CD8-positive, alpha-beta T cell (primary cell): ENCODE measurements at regions of chr17 and their contacts with region 1.

Region 1: DNA sequence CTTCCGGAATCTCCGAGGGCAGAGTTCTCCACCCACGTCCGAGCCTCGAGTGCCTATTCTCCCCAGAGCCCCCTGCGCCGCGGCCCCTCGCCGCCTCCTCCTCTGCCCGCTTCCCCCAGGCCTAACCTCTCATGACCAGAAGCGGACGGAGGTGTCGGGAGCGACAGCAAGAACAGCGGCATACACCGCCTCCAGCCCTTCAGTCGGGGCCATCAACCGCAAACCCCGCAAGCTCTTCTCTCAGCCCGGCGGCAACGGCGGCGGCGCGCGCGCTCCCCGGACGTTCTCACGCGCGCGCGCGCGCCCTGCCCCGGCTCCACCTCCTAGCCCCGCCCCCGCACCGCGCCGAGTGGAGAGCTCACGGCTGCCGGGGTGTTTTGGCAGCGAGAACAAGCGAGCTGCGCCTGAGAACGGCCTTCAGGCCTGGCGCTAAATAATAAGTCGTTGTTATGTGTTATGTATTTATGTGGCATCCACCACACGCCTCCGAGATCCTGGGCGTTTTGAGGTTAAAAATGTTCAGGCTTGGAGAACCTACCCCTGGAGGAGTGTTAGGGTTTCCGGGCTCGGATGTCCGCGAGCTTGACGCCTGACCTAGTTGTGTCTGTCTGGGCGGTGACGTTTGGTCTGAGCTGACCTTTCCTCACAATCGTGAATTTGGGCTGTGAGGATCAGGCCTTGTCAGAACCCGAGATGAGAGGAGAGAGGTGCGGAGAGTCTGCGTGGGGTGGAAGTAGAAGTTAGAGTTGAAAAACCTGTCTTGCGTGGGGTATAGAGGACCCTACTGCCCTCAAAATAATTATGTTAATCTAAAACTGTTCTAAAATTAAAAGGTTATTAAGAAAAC is at the start of gene RNFT1:
- DNase-seq: peak; percentile 82 to 95 (median 91)
- ATAC-seq: peak; percentile 86
- H3K4me3 ChIP-seq: peak within 1 kb of the TSS; percentile 89 to 100
- H3K4me3 Mint-ChIP-seq: peak within 1 kb of the TSS; percentile 95
- H3K27ac ChIP-seq: peak within 1 kb of the TSS; percentile 84 to 93
- H3K27ac Mint-ChIP-seq: peak within 1 kb of the TSS; percentile 97
- H3K4me1 ChIP-seq: peaks cover 22% of the 10 kb centered on the region
- H3K4me1 Mint-ChIP-seq: peaks cover 24% of the 10 kb centered on the region
- H3K27me3 ChIP-seq: no peaks in the 10 kb centered on the region
- H3K27me3 Mint-ChIP-seq: no peaks in the 10 kb centered on the region
- CTCF ChIP-seq: no peak
- total RNA-seq, gene RNFT1: 21.2 to 26.6 TPM

Region 2: DNA sequence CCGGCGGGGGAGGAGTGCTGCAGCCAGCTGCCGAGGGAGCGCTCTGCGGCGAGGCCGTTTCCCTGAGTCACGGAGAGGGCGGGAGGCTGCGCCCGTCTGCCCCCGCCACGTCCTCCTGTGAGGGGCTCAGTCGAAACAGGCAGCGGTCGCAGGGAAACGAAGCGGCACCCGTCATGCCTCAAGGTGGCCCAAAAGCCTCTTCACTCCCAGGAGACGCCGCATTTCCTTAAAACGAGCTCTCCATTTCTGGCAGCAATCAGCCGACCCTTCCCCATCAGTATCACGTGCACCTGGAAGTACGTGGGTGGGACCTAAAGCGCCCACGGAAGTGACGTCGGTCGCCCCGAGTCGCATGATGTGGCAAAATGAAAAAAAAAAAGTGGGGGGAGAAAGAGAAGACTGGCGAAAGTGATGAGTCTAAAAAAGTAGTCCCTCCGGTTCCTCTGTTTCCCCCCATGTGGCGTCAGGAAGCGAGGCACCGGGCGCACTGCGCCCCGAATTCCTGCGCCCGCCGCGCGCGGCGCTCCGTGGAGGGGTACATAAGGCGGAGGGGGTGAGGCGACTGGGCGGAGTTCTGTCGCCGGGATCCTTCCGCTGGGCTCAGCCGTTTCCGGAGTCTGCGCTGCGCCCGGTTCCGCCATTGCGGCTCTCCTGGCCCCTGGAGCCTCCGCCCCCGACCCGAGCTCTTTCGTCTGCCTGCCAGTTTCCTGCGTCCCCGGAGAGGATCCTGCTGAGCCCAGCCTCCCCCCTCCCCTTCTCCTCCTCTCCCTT is 345.2 kb before region 1 on chr17 and contains the start of gene CLTC:
- CTCF ChIA-PET with region 1: no interaction called
- POLR2A ChIA-PET with region 1: interaction called, 5 read pairs
- intact Hi-C with region 1: loop called in 1 of 2 experiments (anchors 10 kb)
- DNase-seq: peak; percentile 83 to 98 (median 90)
- ATAC-seq: peak; percentile 82
- H3K4me3 ChIP-seq: peak within 1 kb of the TSS; percentile 98 to 99
- H3K4me3 Mint-ChIP-seq: peak within 1 kb of the TSS; percentile 96
- H3K27ac ChIP-seq: peak within 1 kb of the TSS; percentile 91 to 99
- H3K27ac Mint-ChIP-seq: peak within 1 kb of the TSS; percentile 98
- H3K4me1 ChIP-seq: peaks cover 37% of the 10 kb centered on the region
- H3K4me1 Mint-ChIP-seq: peaks cover 48% of the 10 kb centered on the region
- H3K27me3 ChIP-seq: no peaks in the 10 kb centered on the region
- H3K27me3 Mint-ChIP-seq: no peaks in the 10 kb centered on the region
- CTCF ChIP-seq: no peak
- total RNA-seq, gene CLTC: 73.4 to 86.0 TPM

Region 3: GRCh38 chr17:59950049-59950448 is 14.7 kb before region 1 on chr17:
- CTCF ChIA-PET with region 1: no interaction called
- POLR2A ChIA-PET with region 1: interaction called, 6 read pairs
- intact Hi-C with region 1: loop called in 1 of 2 experiments (anchors 1 kb)
- DNase-seq: no peak
- ATAC-seq: no peak
- H3K4me3 ChIP-seq: no peak overlapping the region
- H3K4me3 Mint-ChIP-seq: no peak overlapping the region
- H3K27ac ChIP-seq: no peak overlapping the region
- H3K27ac Mint-ChIP-seq: no peak overlapping the region
- H3K4me1 ChIP-seq: no peaks in the 10 kb centered on the region
- H3K4me1 Mint-ChIP-seq: peaks cover 8% of the 10 kb centered on the region
- H3K27me3 ChIP-seq: no peaks in the 10 kb centered on the region
- H3K27me3 Mint-ChIP-seq: no peaks in the 10 kb centered on the region
- CTCF ChIP-seq: no peak

Region 4: DNA sequence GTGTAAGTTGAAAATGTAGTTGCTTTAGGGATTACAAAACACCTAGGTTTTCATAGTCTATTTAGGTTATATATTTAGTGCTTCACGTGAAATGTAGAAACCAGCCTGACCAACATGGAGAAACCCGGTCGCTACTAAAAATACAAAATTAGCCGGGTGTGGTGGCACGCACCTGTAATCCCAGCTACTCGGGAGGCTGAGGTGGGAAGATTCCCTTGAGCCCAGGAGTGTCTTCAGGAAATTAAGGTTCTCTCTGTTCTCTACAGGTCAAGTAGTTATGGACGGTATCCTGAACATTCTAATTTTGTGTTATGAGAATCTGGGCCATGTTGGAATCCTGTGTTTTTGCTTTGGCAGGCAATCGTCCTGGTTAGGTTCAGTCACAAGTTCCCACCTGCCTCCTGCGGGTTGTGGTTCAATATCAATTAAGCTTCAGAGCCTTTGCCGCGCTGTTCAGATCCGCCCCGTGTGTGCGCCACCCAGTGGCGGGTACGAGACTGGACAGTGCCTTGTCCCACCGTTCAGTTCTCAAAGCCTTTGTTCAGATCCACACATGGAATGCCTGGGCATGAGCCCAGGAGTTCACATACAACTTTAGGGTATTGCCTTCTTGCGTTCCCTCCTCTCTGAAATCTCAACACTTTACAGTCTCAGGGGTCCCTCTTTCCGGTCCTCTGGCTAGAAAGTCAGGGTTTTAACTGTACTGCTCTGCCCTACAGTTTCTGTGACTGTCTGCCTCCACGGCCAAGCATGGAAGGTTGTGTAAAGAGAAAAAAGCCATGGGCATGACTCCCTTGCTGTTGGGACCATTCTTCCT is 72.3 kb after region 1 on chr17:
- CTCF ChIA-PET with region 1: interaction called, 7 read pairs
- POLR2A ChIA-PET with region 1: no interaction called
- intact Hi-C with region 1: loop called in 1 of 2 experiments (anchors 5 kb)
- DNase-seq: peak; percentile 29 to 83 (median 69)
- ATAC-seq: peak; percentile 98
- H3K4me3 ChIP-seq: no peak overlapping the region
- H3K4me3 Mint-ChIP-seq: no peak overlapping the region
- H3K27ac ChIP-seq: no peak overlapping the region
- H3K27ac Mint-ChIP-seq: no peak overlapping the region
- H3K4me1 ChIP-seq: peaks cover 3% of the 10 kb centered on the region
- H3K4me1 Mint-ChIP-seq: peaks cover 4% of the 10 kb centered on the region
- H3K27me3 ChIP-seq: peaks cover 0 to 3% of the 10 kb centered on the region in 2 experiments
- H3K27me3 Mint-ChIP-seq: peaks cover 6% of the 10 kb centered on the region
- CTCF ChIP-seq: peak; percentile 76